Activated B cell treated with CpG ODN at 0.5 μM for 24 hours (primary cell): ENCODE measurements at regions of chr10 and their contacts with region 1.

Region 1: GRCh38 chr10:68901104-68901927 is at the start of gene DDX50:
- DNase-seq: peak; percentile 92
- ATAC-seq: peak; percentile 96
- H3K4me3 Mint-ChIP-seq: peak within 1 kb of the TSS; percentile 98
- H3K27ac Mint-ChIP-seq: peak within 1 kb of the TSS; percentile 98
- H3K4me1 Mint-ChIP-seq: peaks cover 40% of the 10 kb centered on the region
- H3K27me3 Mint-ChIP-seq: no peaks in the 10 kb centered on the region
- CTCF ChIP-seq: no peak
- total RNA-seq, gene DDX50: 36.3 and 41.7 TPM in 2 replicates

Region 2: GRCh38 chr10:67849331-67850011 is 1051.8 kb before region 1 on chr10:
- CTCF ChIA-PET with region 1: no interaction called
- POLR2A ChIA-PET with region 1: no interaction called
- intact Hi-C with region 1: loop called (anchors 1 kb)
- DNase-seq: peak; percentile 90
- ATAC-seq: peak; percentile 95
- H3K4me3 Mint-ChIP-seq: peak overlapping the region; percentile 94
- H3K27ac Mint-ChIP-seq: peak overlapping the region; percentile 96
- H3K4me1 Mint-ChIP-seq: peaks cover 13% of the 10 kb centered on the region
- H3K27me3 Mint-ChIP-seq: no peaks in the 10 kb centered on the region
- CTCF ChIP-seq: no peak

Region 3: GRCh38 chr10:68208424-68209042 is 692.8 kb before region 1 on chr10:
- CTCF ChIA-PET with region 1: no interaction called
- POLR2A ChIA-PET with region 1: no interaction called
- intact Hi-C with region 1: loop called (anchors 5 kb)
- DNase-seq: no peak
- ATAC-seq: no peak
- H3K4me3 Mint-ChIP-seq: no peak overlapping the region
- H3K27ac Mint-ChIP-seq: no peak overlapping the region
- H3K4me1 Mint-ChIP-seq: no peaks in the 10 kb centered on the region
- H3K27me3 Mint-ChIP-seq: peaks cover 9% of the 10 kb centered on the region
- CTCF ChIP-seq: no peak

Region 4: GRCh38 chr10:68784476-68784875 is 116.8 kb before region 1 on chr10:
- CTCF ChIA-PET with region 1: no interaction called
- POLR2A ChIA-PET with region 1: interaction called, 4 read pairs
- intact Hi-C with region 1: loop called (anchors 5 kb)
- DNase-seq: no peak
- ATAC-seq: no peak
- H3K4me3 Mint-ChIP-seq: no peak overlapping the region
- H3K27ac Mint-ChIP-seq: no peak overlapping the region
- H3K4me1 Mint-ChIP-seq: peaks cover 26% of the 10 kb centered on the region
- H3K27me3 Mint-ChIP-seq: no peaks in the 10 kb centered on the region
- CTCF ChIP-seq: no peak

Region 5: GRCh38 chr10:68955832-68956532 is 54.7 kb after region 1 on chr10 and contains the start of gene DDX21:
- CTCF ChIA-PET with region 1: interaction called, 4 read pairs
- POLR2A ChIA-PET with region 1: interaction called, 29 read pairs
- intact Hi-C with region 1: loop called (anchors 1 kb)
- DNase-seq: peak; percentile 79
- ATAC-seq: peak; percentile 82
- H3K4me3 Mint-ChIP-seq: peak within 1 kb of the TSS; percentile 100
- H3K27ac Mint-ChIP-seq: peak within 1 kb of the TSS; percentile 100
- H3K4me1 Mint-ChIP-seq: peaks cover 41% of the 10 kb centered on the region
- H3K27me3 Mint-ChIP-seq: no peaks in the 10 kb centered on the region
- CTCF ChIP-seq: no peak
- total RNA-seq, gene DDX21: 111 and 112 TPM in 2 replicates

Region 6: GRCh38 chr10:69179743-69180524 is 278.6 kb after region 1 on chr10 and contains the start of gene SUPV3L1:
- CTCF ChIA-PET with region 1: no interaction called
- POLR2A ChIA-PET with region 1: no interaction called
- intact Hi-C with region 1: loop called (anchors 1 kb)
- DNase-seq: peak; percentile 87
- ATAC-seq: peak; percentile 87
- H3K4me3 Mint-ChIP-seq: peak within 1 kb of the TSS; percentile 95
- H3K27ac Mint-ChIP-seq: peak within 1 kb of the TSS; percentile 100
- H3K4me1 Mint-ChIP-seq: peaks cover 39% of the 10 kb centered on the region
- H3K27me3 Mint-ChIP-seq: no peaks in the 10 kb centered on the region
- CTCF ChIP-seq: no peak
- total RNA-seq, gene SUPV3L1: 38.7 and 49.1 TPM in 2 replicates